Psoas muscle (tissue), 8 donors: ENCODE measurements at regions of chr18 and their contacts with region 1.

Region 1: GRCh38 chr18:36335476-36336279 is 38.2 kb downstream of the FHOD3 start:
- DNase-seq: no peak
- ATAC-seq: no peak
- H3K4me3 ChIP-seq: no peak overlapping the region
- H3K27ac ChIP-seq: no peak overlapping the region
- H3K4me1 ChIP-seq: peaks cover 2% of the 10 kb centered on the region
- H3K27me3 ChIP-seq: no peaks in the 10 kb centered on the region
- CTCF ChIP-seq: no peak

Region 2: DNA sequence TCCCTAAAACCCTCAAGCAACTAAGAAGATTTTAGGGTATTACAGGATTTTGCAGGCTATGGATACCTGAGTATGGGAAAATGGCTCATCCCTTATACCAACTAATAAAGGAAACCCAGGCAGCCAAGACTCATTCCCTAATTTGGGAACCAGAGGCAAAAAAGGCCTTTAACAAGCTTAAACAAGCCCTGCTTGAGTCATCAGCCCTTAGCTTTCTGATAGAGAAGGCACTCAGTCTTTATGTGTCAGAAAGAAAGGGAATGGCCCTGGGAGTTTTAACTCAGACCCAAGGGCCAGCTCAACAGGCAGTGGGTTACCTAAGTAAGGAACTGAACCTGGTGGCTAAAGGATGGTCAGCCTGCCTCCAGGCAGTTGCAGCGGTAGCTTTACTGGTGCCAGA is 460.1 kb before region 1 on chr18:
- intact Hi-C with region 1: loop called in 1 of 2 experiments (anchors 5 kb)
- DNase-seq: no peak
- ATAC-seq: no peak
- H3K4me3 ChIP-seq: no peak overlapping the region
- H3K27ac ChIP-seq: no peak overlapping the region
- H3K4me1 ChIP-seq: no peaks in the 10 kb centered on the region
- H3K27me3 ChIP-seq: no peaks in the 10 kb centered on the region
- CTCF ChIP-seq: no peak

Region 3: DNA sequence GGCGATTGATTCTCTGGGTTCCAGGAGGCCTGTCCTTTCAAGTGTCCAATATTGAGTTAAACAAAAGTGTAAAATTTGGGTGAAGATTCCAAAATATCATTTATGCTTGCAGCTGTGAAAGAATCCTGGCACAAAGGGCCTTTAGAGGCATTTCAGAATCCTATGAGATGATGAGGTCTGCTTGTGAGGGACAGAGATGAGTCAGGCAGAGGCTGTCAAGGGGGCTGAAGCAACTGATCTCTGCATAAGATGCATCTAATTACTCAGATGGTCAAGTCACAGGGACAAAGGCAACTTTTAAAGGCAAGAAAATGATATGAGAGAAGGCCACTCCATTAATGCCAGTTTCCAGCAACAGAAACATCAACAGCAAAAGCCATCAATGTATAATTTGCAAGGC is 40.7 kb after region 1 on chr18:
- intact Hi-C with region 1: loop called in 1 of 2 experiments (anchors 5 kb)
- DNase-seq: no peak
- ATAC-seq: no peak
- H3K4me3 ChIP-seq: no peak overlapping the region
- H3K27ac ChIP-seq: no peak overlapping the region
- H3K4me1 ChIP-seq: peaks cover 24% of the 10 kb centered on the region
- H3K27me3 ChIP-seq: no peaks in the 10 kb centered on the region
- CTCF ChIP-seq: no peak